ENCODE measurements at regions of chr17 and their contacts with region 1.

Region 1: DNA sequence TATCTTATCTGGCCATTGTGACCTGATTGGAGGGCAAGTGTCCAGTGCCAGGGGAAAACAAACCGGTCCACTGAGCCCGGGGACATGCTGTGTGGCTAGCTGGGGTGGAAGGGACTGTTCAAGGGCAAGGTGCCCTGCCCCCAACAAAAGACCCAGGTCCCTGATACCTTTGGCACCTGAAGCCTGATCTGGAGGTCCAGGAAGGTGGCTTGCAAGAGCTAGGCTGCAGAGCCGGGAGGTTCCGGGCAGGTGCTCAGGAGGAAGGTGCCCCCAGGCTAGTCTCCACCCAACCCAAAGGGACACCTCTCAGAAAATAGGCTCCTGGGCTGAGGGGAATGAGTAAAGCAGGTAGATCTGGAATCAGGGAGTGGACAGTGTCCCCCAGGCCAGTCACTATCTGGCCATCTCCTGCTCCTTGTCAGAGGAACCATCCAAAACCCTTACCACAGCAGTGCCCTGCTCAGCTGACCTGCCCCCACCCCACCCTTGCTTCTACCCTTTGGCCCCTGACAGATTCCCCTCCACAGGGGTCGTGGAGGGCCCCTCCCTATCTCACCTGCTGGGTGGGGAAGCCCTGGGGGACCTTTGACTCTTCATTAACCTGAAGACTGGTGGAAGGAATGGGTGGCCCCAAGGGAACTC is 6.2 kb downstream of the NAT9 start:
- DNase-seq: no peak
- ATAC-seq: no peak

Region 2: GRCh38 chr17:74744714-74745547 is 25.0 kb before region 1 on chr17:
- intact Hi-C with region 1: loop called (anchors 1 kb)
- DNase-seq: peak; percentile 94
- ATAC-seq: peak; percentile 36